ENCODE measurements at regions of chr2 and their contacts with region 1.

Region 1: GRCh38 chr2:30649278-30649677 is 158.0 kb downstream of the CAPN13 start:
- DNase-seq: no peak
- ATAC-seq: no peak
- H3K4me3 Mint-ChIP-seq: no peak overlapping the region
- H3K27ac Mint-ChIP-seq: no peak overlapping the region
- H3K4me1 Mint-ChIP-seq: no peaks in the 10 kb centered on the region
- H3K27me3 Mint-ChIP-seq: no peaks in the 10 kb centered on the region
- CTCF ChIP-seq: no peak

Region 2: GRCh38 chr2:30321466-30321865 is 327.8 kb before region 1 on chr2:
- CTCF ChIA-PET with region 1: no interaction called
- POLR2A ChIA-PET with region 1: interaction called, 11 read pairs
- intact Hi-C with region 1: no loop called
- DNase-seq: no peak
- ATAC-seq: no peak
- H3K4me3 Mint-ChIP-seq: no peak overlapping the region
- H3K27ac Mint-ChIP-seq: no peak overlapping the region
- H3K4me1 Mint-ChIP-seq: peaks cover 47% of the 10 kb centered on the region
- H3K27me3 Mint-ChIP-seq: no peaks in the 10 kb centered on the region
- CTCF ChIP-seq: no peak

Region 3: GRCh38 chr2:30666307-30666874 is 17.1 kb after region 1 on chr2:
- CTCF ChIA-PET with region 1: no interaction called
- POLR2A ChIA-PET with region 1: no interaction called
- intact Hi-C with region 1: no loop called
- DNase-seq: no peak
- ATAC-seq: peak; percentile 52
- H3K4me3 Mint-ChIP-seq: no peak overlapping the region
- H3K27ac Mint-ChIP-seq: peak overlapping the region; percentile 58
- H3K4me1 Mint-ChIP-seq: peaks cover 4% of the 10 kb centered on the region
- H3K27me3 Mint-ChIP-seq: no peaks in the 10 kb centered on the region
- CTCF ChIP-seq: no peak

Region 4: DNA sequence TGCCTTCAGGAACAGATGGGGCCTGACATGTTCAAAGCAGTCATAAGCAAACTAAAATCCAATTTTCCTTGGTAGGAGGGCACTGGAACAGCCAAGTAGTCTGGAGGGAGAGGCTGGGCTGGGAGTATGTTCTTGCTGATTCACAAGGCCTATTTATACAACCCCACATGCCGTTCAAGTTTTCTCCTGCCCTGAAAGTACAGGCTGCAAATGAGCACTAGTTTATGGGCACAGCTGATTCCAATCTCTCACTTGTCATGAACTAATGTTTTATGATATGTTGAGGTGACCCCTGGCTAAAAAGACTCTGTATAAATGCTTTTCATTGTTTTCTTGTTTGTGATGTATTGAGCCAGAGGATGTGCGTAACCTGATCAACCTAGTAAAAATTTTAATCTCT is 1114.9 kb after region 1 on chr2:
- CTCF ChIA-PET with region 1: no interaction called
- POLR2A ChIA-PET with region 1: no interaction called
- intact Hi-C with region 1: no loop called
- DNase-seq: no peak
- ATAC-seq: no peak
- H3K4me3 Mint-ChIP-seq: no peak overlapping the region
- H3K27ac Mint-ChIP-seq: no peak overlapping the region
- H3K4me1 Mint-ChIP-seq: no peaks in the 10 kb centered on the region
- H3K27me3 Mint-ChIP-seq: peaks cover 8% of the 10 kb centered on the region
- CTCF ChIP-seq: no peak

Measured in activated B cell treated with CpG ODN at 0.5 μM for 24 hours (primary cell).